PC-9 (cell line): ENCODE measurements at regions of chr10 and their contacts with region 1.

Region 1: DNA sequence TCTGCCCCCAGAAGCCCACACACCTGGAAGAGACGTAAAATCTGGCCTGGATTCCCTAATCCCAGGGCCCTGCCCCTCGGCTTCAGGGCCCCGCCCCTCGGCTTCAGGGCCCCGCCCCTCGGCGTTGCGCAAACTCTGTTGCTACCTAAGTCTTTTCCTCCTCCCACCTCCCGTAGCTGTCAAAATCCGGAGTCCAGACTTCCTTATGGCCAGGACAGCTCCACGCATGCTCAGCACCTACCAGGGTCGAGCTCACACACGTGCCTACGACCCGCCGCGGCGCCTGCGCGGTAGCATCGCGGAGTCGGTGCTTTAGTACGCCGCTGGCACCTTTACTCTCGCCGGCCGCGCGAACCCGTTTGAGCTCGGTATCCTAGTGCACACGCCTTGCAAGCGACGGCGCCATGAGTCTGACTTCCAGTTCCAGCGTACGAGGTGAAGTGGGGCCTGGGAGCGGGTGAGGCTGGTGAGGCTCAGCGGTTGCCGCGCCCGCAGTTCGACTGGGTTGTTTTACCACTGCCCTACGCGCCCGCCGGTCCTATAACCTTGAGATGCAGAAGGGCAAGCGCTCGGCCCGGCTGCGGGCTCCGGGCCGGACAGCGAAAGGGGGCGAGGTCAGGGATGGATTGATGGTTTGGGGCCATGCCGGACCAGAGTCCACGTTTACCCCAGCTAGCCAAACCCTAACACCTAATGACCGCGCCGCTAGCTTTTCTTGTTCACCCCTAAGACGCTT is at the start of gene CISD1:
- DNase-seq: peak; percentile 98
- H3K4me3 ChIP-seq: peak within 1 kb of the TSS; percentile 66
- H3K27ac ChIP-seq: peak within 1 kb of the TSS; percentile 86
- H3K4me1 ChIP-seq: peaks cover 27% of the 10 kb centered on the region
- H3K27me3 ChIP-seq: no peaks in the 10 kb centered on the region
- CTCF ChIP-seq: no peak
- total RNA-seq, gene CISD1: 62.5 and 75.3 TPM in 2 replicates

Region 2: GRCh38 chr10:58094985-58095718 is 173.9 kb before region 1 on chr10:
- CTCF ChIA-PET with region 1: no interaction called
- POLR2A ChIA-PET with region 1: no interaction called
- intact Hi-C with region 1: no loop called
- DNase-seq: no peak
- H3K4me3 ChIP-seq: no peak overlapping the region
- H3K27ac ChIP-seq: no peak overlapping the region
- H3K4me1 ChIP-seq: no peaks in the 10 kb centered on the region
- H3K27me3 ChIP-seq: no peaks in the 10 kb centered on the region
- CTCF ChIP-seq: no peak

Region 3: DNA sequence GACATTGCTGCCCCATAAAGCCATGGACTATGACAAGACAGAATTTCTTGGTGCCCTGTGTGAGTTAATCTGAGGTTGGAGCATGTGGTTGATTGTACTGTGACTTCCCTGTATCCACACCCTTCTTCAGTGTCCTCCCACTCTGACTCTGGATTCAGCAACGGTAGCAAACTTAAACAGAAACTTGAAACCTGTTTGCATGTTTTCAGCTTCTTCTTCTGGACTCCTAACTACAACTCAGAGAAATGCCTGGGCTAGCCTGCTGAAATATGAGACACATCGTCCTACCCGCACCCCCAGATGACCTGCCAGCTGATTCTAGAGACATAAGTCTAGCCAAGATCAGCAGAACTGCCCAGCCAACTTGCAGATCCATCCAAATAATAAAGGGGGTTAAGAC is 79.8 kb before region 1 on chr10:
- CTCF ChIA-PET with region 1: no interaction called
- POLR2A ChIA-PET with region 1: interaction called, 9 read pairs
- intact Hi-C with region 1: loop called (anchors 2 kb)
- DNase-seq: peak in 1 of 2 experiments; percentile 45
- H3K4me3 ChIP-seq: no peak overlapping the region
- H3K27ac ChIP-seq: no peak overlapping the region
- H3K4me1 ChIP-seq: no peaks in the 10 kb centered on the region
- H3K27me3 ChIP-seq: no peaks in the 10 kb centered on the region
- CTCF ChIP-seq: no peak

Region 4: DNA sequence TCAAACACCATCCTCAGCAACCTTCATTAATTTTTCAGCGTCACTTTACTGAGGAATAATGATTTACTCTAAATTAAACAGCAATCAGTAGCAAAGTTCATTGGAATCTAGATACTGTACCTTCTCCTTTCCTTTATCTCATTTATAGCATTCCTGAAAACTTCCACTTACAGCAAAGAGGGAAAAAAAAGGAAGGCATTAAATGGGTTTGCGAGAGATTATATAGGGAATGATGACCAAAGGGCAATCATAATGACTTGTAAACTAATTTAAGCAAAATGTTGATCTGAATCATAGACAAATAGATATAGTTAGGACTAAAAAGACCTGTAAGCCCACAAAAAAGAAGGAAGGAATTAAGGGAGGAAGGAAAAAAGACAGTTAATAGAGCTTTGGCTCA is 43.4 kb before region 1 on chr10:
- CTCF ChIA-PET with region 1: no interaction called
- POLR2A ChIA-PET with region 1: no interaction called
- intact Hi-C with region 1: no loop called
- DNase-seq: no peak
- H3K4me3 ChIP-seq: no peak overlapping the region
- H3K27ac ChIP-seq: no peak overlapping the region
- H3K4me1 ChIP-seq: no peaks in the 10 kb centered on the region
- H3K27me3 ChIP-seq: no peaks in the 10 kb centered on the region
- CTCF ChIP-seq: no peak

Region 5: GRCh38 chr10:58237014-58237830 is 31.8 kb before region 1 on chr10:
- CTCF ChIA-PET with region 1: interaction called, 4 read pairs
- POLR2A ChIA-PET with region 1: interaction called, 6 read pairs
- intact Hi-C with region 1: loop called (anchors 2 kb)
- DNase-seq: peak in 1 of 2 experiments; percentile 56
- H3K4me3 ChIP-seq: no peak overlapping the region
- H3K27ac ChIP-seq: no peak overlapping the region
- H3K4me1 ChIP-seq: peaks cover 11% of the 10 kb centered on the region
- H3K27me3 ChIP-seq: no peaks in the 10 kb centered on the region
- CTCF ChIP-seq: no peak

Region 6: GRCh38 chr10:58334817-58335305 is 65.8 kb after region 1 on chr10 and contains the start of gene UBE2D1:
- CTCF ChIA-PET with region 1: no interaction called
- POLR2A ChIA-PET with region 1: no interaction called
- intact Hi-C with region 1: loop called (anchors 1 kb)
- DNase-seq: peak; percentile 78 to 89
- H3K4me3 ChIP-seq: peak within 1 kb of the TSS; percentile 66
- H3K27ac ChIP-seq: peak within 1 kb of the TSS; percentile 60
- H3K4me1 ChIP-seq: peaks cover 23% of the 10 kb centered on the region
- H3K27me3 ChIP-seq: no peaks in the 10 kb centered on the region
- CTCF ChIP-seq: no peak; the same call in 1 of the 2 replicates
- total RNA-seq, gene UBE2D1: 16.9 and 24.0 TPM in 2 replicates

Region 7: DNA sequence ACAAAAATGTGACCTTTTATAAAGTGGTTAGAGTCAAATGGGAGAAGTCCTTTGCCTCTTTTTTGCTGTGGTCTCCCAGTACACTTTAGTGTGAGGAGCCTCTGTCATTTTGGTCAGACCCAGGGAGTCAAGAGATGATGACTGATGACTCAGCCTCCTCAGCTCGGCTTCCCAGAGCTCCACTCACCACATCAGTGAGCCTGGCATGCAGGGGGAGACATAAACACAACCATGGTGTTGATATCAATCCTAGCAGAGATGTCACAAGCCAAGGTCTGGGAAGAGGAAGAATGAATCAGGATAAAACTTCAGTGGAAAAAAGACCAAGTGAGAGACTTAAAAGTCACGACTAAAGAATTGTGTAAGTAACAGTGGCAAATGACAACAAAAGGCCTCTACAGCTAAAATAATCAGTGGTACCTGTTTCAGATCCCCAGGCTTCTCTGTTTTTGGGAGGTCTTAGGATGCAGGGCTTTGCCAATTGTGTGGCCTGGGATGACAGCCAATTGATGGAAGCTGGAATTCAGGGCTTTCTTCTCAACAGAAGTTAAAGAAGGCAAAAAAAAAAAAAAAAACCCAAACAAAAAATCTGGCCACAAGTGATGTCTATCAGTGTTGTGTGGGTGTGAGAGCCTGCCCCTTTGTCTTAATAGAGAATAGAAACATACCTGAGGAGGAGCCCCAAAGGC is 166.4 kb after region 1 on chr10:
- CTCF ChIA-PET with region 1: no interaction called
- POLR2A ChIA-PET with region 1: no interaction called
- intact Hi-C with region 1: loop called (anchors 2 kb)
- DNase-seq: peak; percentile 70 to 89
- H3K4me3 ChIP-seq: peak overlapping the region; percentile 13; the same call in 1 of the 2 replicates
- H3K27ac ChIP-seq: peak overlapping the region; percentile 87
- H3K4me1 ChIP-seq: peaks cover 43% of the 10 kb centered on the region
- H3K27me3 ChIP-seq: no peaks in the 10 kb centered on the region
- CTCF ChIP-seq: no peak